ENCODE measurements at regions of chr17 and their contacts with region 1.

Region 1: GRCh38 chr17:68260051-68260762 is 12.4 kb downstream of the AMZ2 start:
- DNase-seq: peak; percentile 44 to 64
- H3K4me3 ChIP-seq: no peak overlapping the region
- H3K27ac ChIP-seq: peak overlapping the region; percentile 76 to 96 (median 93)
- H3K4me1 ChIP-seq: peaks cover 9 to 14% of the 10 kb centered on the region in 2 donors
- H3K27me3 ChIP-seq: no peaks in the 10 kb centered on the region
- CTCF ChIP-seq: no peak
- POLR2A ChIP-seq: peak in 1 of 2 donors; percentile 34

Region 2: DNA sequence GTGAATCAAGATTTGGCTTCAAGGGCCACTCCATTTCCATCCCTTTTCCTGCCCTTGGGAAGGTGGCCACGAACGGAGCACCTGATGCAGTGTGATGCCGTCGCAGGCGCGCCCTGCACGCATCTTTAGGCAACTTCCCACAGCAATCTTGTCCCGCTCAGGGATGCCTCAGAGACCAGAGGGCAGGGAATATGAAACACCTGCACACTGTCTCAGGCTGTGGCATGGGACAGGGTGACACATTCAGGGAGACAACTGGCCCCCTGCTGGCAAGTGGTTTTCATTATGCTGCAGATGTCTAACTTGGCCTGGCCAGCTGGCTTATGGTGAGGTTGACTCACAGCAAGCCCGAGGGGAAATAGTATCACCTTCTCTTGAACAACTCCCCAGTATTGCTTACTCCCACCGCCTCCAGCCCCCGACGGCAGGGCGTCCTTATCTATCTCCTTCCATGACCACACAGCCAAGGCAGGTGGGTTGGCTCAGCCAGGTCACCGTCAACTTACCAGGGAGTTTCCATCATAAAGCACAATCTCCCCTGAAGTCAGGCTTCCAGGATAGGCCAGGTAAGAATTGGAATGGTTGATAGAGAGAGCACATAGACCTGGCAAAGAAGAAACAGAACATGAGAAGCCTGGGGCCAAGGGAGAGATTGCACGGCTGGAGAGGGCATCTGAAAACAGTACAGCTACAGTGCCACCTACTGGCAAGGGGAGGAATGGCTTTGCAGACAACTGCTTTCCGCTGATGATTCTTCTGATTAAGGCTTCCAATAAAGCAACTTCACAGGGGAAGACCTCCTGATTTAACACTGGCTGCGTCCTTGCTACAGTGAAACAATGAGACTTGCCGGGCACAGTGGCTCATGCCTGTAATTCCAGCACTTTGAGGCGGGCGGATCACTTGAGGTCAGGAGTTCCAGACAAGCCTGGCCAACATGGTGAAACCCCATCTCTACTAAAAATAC is 176.0 kb after region 1 on chr17:
- intact Hi-C with region 1: loop called (anchors 5 kb)
- DNase-seq: peak; percentile 76 to 83
- H3K4me3 ChIP-seq: no peak overlapping the region
- H3K27ac ChIP-seq: no peak overlapping the region
- H3K4me1 ChIP-seq: peaks cover 0 to 11% of the 10 kb centered on the region in 2 donors
- H3K27me3 ChIP-seq: no peaks in the 10 kb centered on the region
- CTCF ChIP-seq: peak; percentile 83 to 93 (median 88)
- POLR2A ChIP-seq: no peak

Region 3: GRCh38 chr17:68462381-68463210 is 202.4 kb after region 1 on chr17:
- intact Hi-C with region 1: loop called (anchors 5 kb)
- DNase-seq: peak; percentile 79 to 82
- H3K4me3 ChIP-seq: no peak overlapping the region
- H3K27ac ChIP-seq: peak overlapping the region; percentile 75 to 83 (median 75)
- H3K4me1 ChIP-seq: peaks cover 24 to 35% of the 10 kb centered on the region in 2 donors
- H3K27me3 ChIP-seq: no peaks in the 10 kb centered on the region
- CTCF ChIP-seq: peak; percentile 62 to 86 (median 72)
- POLR2A ChIP-seq: peak in 1 of 2 donors; percentile 74

Measured in thyroid gland (tissue), 4 donors.